Motor neuron (in vitro differentiated cells): ENCODE measurements at regions of chr1 and their contacts with region 1.

Region 1: GRCh38 chr1:185960422-185961321 is 226.5 kb downstream of the HMCN1 start:
- ATAC-seq: peak in 4 of 8 experiments; percentile 27 to 70 (median 54)
- H3K4me3 ChIP-seq: no peak overlapping the region
- H3K27ac ChIP-seq: no peak overlapping the region
- H3K4me1 ChIP-seq: peaks cover 2 to 12% of the 10 kb centered on the region in 2 donors

Region 2: DNA sequence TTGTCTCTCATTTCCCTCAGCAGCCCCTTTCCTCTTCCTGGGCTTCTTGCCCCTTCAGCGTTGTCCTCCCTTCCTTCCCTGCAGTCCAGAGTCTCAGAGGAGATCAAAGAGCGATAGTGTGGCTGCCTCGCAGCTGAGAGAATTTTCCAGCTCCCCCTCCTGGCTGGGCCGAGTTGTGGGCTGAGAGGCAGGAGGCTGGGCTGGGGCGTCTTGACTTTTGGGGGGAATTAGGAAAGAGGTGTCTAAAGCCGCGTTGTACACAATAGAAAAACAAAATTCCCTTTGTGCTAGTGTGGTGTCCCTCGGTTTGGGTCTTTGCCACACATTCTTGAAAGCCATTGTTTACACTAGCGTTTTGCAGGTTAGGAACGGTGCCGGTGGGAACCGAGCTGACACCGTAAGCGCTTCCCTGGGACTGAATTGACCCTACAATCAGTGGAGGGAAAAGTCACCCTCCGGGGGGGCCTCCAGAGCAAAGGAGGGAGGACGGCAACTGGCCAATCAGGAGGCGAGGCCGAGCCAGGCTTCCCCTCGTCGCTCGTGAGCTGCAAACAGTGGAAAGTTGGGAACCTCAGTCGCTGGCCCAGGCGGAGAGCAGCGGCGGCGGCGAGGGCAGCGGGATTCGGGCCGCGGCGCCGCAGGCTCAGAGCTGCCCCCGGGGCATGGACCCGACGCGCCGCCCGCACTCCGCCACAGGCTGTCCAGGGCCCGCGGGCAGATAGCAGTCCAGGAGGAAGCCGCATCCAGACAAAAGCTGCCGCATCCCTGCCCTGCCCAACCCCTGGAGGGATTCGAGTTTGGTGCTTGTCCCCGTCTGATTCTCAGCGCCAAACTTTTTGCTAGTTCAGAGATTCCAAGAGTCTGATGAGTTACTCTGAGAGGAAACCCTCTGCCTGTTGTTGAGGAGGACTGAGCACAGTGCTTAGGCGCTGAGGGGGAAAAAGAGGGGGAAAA is 226.6 kb before region 1 on chr1 and contains the start of gene HMCN1:
- in situ Hi-C with region 1: loop called in 1 of 9 experiments (anchors 25 kb)
- ATAC-seq: peak; percentile 82 to 94 (median 92)
- H3K4me3 ChIP-seq: peak within 1 kb of the TSS; percentile 40 to 44 (median 42)
- H3K27ac ChIP-seq: no peak within 1 kb of the TSS
- H3K4me1 ChIP-seq: no peaks in the 10 kb centered on the region
- total RNA-seq, gene HMCN1: 0.43 to 56.8 (median 6.8) TPM

Region 3: GRCh38 chr1:185759061-185759460 is 201.6 kb before region 1 on chr1:
- in situ Hi-C with region 1: no loop called
- ATAC-seq: no peak
- H3K4me3 ChIP-seq: no peak overlapping the region
- H3K27ac ChIP-seq: no peak overlapping the region
- H3K4me1 ChIP-seq: no peaks in the 10 kb centered on the region

Region 4: GRCh38 chr1:185846672-185847444 is 113.8 kb before region 1 on chr1:
- in situ Hi-C with region 1: loop called in 1 of 9 experiments (anchors 25 kb)
- ATAC-seq: peak in 2 of 8 experiments; percentile 40 to 71
- H3K4me3 ChIP-seq: no peak overlapping the region
- H3K27ac ChIP-seq: no peak overlapping the region
- H3K4me1 ChIP-seq: no peaks in the 10 kb centered on the region

Region 5: GRCh38 chr1:186059312-186059711 is 98.6 kb after region 1 on chr1:
- in situ Hi-C with region 1: loop called in 1 of 9 experiments (anchors 25 kb)
- ATAC-seq: peak in 2 of 8 experiments; percentile 38 to 61
- H3K4me3 ChIP-seq: no peak overlapping the region
- H3K27ac ChIP-seq: no peak overlapping the region
- H3K4me1 ChIP-seq: no peaks in the 10 kb centered on the region